Mammary epithelial cell (primary cell): ENCODE measurements at regions of chr9 and their contacts with region 1.

Region 1: GRCh38 chr9:2655411-2655901 is 33.9 kb downstream of the VLDLR start:
- DNase-seq: peak; percentile 92
- H3K4me3 ChIP-seq: no peak overlapping the region
- H3K27ac ChIP-seq: peak overlapping the region; percentile 87
- H3K4me1 ChIP-seq: peaks cover 26% of the 10 kb centered on the region
- H3K27me3 ChIP-seq: no peaks in the 10 kb centered on the region
- CTCF ChIP-seq: no peak

Region 2: GRCh38 chr9:2158111-2158610 is 497.3 kb before region 1 on chr9:
- CTCF ChIA-PET with region 1: no interaction called
- dilution Hi-C with region 1: no loop called
- in situ Hi-C with region 1: no loop called
- intact Hi-C with region 1: loop called (anchors 1 kb)
- DNase-seq: peak; percentile 76
- H3K4me3 ChIP-seq: peak overlapping the region; percentile 49 to 77 (median 71)
- H3K27ac ChIP-seq: peak overlapping the region; percentile 84
- H3K4me1 ChIP-seq: peaks cover 42% of the 10 kb centered on the region
- H3K27me3 ChIP-seq: no peaks in the 10 kb centered on the region
- CTCF ChIP-seq: peak; percentile 2 to 7

Region 3: DNA sequence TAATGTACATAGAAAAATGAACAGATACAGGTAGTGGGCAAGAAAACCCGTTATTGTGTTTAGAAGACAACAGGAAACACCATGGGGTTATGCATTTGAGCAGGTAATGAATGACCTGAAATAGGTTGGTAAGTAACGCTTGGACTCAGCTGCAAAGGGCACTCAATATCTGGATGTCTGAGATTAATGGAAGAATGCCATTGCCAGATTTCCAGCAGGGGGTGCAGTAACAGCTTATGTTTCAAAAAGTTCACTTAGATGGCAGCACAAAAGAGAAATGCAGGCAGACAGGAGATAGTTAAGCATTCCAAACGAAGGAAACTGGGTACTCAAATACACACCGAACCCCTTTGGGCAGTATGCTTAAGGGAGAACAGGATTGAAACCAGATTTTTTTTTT is 319.4 kb before region 1 on chr9:
- CTCF ChIA-PET with region 1: no interaction called
- dilution Hi-C with region 1: no loop called
- in situ Hi-C with region 1: no loop called
- intact Hi-C with region 1: loop called (anchors 5 kb)
- DNase-seq: no peak
- H3K4me3 ChIP-seq: no peak overlapping the region
- H3K27ac ChIP-seq: no peak overlapping the region
- H3K4me1 ChIP-seq: peaks cover 29% of the 10 kb centered on the region
- H3K27me3 ChIP-seq: no peaks in the 10 kb centered on the region
- CTCF ChIP-seq: peak in 1 of 2 donors; percentile 42

Region 4: DNA sequence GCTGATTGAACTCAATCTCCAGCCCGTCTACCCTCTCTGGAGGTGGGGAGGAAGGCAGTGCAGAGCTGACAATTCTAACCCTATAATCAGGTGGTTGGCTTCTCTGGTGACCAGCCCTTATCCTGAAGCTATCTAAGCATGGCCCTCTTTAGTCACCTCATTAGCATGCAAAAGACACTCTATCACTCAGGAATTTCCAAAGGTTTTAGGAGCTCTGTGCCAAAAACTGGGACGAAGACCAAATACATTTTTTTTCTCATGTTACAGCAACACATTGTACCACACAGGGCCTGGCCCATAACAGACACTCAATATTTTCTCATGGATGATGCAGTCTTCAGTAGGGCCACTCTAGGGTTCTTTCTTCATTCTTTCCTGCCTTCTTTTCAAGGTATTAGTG is 152.7 kb before region 1 on chr9:
- CTCF ChIA-PET with region 1: no interaction called
- dilution Hi-C with region 1: no loop called
- in situ Hi-C with region 1: no loop called
- intact Hi-C with region 1: no loop called
- DNase-seq: peak; percentile 43
- H3K4me3 ChIP-seq: no peak overlapping the region
- H3K27ac ChIP-seq: no peak overlapping the region
- H3K4me1 ChIP-seq: peaks cover 6% of the 10 kb centered on the region
- H3K27me3 ChIP-seq: no peaks in the 10 kb centered on the region
- CTCF ChIP-seq: no peak

Region 5: GRCh38 chr9:2593744-2594143 is 61.7 kb before region 1 on chr9:
- CTCF ChIA-PET with region 1: no interaction called
- dilution Hi-C with region 1: no loop called
- in situ Hi-C with region 1: no loop called
- intact Hi-C with region 1: no loop called
- DNase-seq: no peak
- H3K4me3 ChIP-seq: no peak overlapping the region
- H3K27ac ChIP-seq: no peak overlapping the region
- H3K4me1 ChIP-seq: no peaks in the 10 kb centered on the region
- H3K27me3 ChIP-seq: no peaks in the 10 kb centered on the region
- CTCF ChIP-seq: no peak

Region 6: DNA sequence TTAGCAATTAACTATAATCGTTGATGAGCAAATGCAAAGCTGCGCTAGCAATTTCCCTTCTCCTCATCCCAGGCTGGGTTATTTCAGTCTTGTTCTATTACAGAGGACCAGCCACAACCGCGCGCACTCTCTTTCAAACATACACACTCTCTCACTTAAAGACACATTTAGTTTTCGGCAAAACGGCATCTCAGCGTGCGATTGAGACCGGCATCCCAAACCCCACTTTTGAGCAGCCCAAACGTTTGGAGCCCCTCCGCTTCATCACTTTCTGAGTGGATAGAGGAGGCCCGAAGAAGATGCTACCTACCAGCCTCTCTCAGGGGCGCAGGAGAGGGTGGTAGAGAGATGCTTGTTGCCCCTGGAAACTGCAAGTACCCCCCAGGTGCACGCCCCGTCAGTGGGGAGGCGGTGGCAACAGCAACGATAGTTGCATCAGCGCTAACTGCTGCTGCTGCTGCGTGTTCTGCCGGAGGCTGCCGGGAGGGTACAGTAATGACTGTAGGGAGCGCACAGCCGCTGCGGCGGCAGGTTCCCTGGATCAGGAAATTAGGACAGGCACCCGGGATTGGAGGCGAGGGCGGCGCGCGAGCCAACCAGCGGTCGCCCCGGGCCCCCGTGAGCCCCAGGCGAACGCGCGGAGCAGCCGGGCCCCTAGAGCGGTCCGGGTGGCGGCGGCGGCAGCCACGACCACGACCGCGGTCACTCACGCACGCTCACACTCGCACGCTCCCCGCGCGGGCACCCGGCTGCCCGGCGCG is 34.4 kb before region 1 on chr9:
- CTCF ChIA-PET with region 1: no interaction called
- dilution Hi-C with region 1: no loop called
- in situ Hi-C with region 1: no loop called
- intact Hi-C with region 1: loop called (anchors 1 kb)
- DNase-seq: peak; percentile 76
- H3K4me3 ChIP-seq: peak overlapping the region; percentile 66 to 86 (median 80)
- H3K27ac ChIP-seq: no peak overlapping the region
- H3K4me1 ChIP-seq: peaks cover 18% of the 10 kb centered on the region
- H3K27me3 ChIP-seq: no peaks in the 10 kb centered on the region
- CTCF ChIP-seq: no peak

Region 7: DNA sequence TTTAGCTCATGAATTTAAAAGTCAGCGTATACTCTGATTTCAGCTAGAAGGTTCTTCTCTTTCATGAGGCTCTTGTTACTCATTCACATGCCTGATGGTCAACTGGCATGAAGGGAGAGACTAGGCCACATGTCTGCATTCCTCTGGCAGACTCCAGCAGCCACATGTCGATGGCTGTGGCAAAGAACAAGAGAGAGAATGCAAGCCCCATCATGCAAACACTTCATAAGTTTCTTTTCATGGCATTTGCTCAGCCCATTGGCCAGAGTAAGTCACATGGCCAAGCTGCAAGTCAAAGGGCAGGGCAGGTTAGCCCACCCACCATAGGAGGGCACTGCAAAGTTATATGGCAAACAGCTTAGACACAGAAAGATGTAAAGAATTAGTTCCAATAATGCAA is 67.3 kb after region 1 on chr9:
- CTCF ChIA-PET with region 1: no interaction called
- dilution Hi-C with region 1: no loop called
- in situ Hi-C with region 1: no loop called
- intact Hi-C with region 1: loop called (anchors 2 kb)
- DNase-seq: peak; percentile 88
- H3K4me3 ChIP-seq: no peak overlapping the region
- H3K27ac ChIP-seq: peak overlapping the region; percentile 11
- H3K4me1 ChIP-seq: peaks cover 22% of the 10 kb centered on the region
- H3K27me3 ChIP-seq: no peaks in the 10 kb centered on the region
- CTCF ChIP-seq: no peak

Region 8: DNA sequence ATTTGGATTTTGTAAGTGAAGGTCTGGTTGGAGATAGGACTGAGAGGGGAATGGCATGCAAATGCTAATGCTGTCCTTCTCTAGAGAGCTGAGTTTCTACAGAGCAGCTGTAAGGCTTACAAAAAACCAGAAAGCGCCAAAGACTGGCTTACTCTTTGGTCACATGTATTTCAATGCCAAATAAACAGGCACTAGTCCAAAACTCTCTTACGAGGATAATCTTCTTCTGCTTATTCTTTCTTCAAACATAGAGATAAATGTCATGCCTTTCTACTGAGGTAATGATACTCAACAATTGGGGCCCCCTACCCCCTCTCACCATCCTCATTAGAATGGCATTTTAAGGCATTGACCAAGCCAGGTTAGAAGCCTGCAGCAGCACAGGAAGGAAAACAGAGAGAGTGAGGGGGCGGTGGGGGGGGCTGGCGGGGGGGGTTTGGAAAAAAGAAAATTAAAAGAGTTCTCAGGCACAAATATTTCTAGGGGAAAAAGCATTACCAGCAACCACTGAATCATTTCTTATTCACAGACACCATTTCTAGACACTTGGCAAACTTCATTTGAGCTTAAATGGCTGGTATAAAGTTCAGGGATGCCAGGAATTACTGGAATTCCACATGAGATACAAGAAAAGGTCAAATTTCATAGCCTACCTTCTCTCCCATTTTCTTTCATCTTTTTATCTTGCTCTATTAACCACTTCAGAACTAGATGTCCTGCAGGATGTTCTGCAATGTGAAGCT is 154.4 kb after region 1 on chr9:
- CTCF ChIA-PET with region 1: no interaction called
- dilution Hi-C with region 1: no loop called
- in situ Hi-C with region 1: no loop called
- intact Hi-C with region 1: loop called (anchors 10 kb)
- DNase-seq: no peak
- H3K4me3 ChIP-seq: no peak overlapping the region
- H3K27ac ChIP-seq: no peak overlapping the region
- H3K4me1 ChIP-seq: no peaks in the 10 kb centered on the region
- H3K27me3 ChIP-seq: no peaks in the 10 kb centered on the region
- CTCF ChIP-seq: no peak

Region 9: DNA sequence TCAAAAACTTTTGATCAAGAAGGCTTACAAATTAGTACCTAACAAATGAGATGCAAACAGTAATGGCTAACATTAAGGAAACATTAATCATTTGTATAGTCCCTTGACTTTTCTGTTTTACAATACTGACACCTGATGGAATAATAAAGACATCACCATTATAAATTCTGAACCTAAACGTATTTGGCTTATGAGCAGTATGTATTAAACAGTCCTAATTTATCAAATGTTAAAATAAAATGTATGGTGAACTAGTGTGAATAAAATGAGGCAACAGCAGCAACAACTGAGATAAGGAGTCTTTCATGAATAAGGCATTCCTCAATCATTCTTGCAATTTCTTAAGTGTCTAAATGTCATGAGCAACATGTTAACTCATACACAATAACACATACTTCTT is 182.5 kb after region 1 on chr9:
- CTCF ChIA-PET with region 1: no interaction called
- dilution Hi-C with region 1: no loop called
- in situ Hi-C with region 1: no loop called
- intact Hi-C with region 1: loop called (anchors 2 kb)
- DNase-seq: no peak
- H3K4me3 ChIP-seq: no peak overlapping the region
- H3K27ac ChIP-seq: no peak overlapping the region
- H3K4me1 ChIP-seq: peaks cover 18% of the 10 kb centered on the region
- H3K27me3 ChIP-seq: no peaks in the 10 kb centered on the region
- CTCF ChIP-seq: peak; percentile 15 to 42